Posterior cingulate gyrus (tissue), 11 donors: ENCODE measurements at regions of chr4 and their contacts with region 1.

Region 1: DNA sequence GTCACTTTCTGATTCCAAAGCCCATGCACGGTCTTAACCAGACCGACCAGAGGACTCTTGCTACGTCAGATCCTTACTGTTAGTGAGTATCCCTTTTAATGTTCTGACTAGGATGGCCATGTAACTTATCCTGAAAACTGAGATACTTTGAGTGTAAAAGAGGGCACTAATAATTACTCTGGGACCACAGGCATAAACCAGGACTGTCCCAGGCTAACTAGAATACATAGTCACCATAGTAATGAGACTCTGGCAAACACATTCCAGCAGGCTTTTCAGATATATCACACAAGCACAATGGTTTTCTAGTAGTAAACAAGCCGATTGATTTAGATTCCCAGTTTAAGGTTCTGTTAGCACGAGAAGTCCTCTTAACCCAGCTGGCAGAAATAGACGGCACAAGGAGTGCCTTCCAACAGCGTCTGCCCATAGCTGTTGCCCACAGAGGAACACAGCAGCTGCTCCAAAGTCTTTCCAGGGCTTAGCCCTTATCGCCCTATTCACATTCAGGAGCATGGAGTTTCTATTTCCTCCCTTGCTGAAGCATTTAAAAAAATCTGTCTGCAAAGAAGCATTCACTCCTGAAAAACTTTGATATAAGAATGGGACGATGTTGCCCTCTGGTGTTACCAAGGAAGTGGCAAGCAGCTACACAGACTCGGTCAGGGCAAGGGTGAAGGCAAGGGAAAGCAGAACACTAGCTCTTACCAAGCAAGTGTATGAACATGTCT is 92.4 kb downstream of the CXCL13 start:
- DNase-seq: peak in 3 of 10 donors; percentile 13 to 69 (median 14)

Region 2: GRCh38 chr4:77618383-77619122 is 79.5 kb before region 1 on chr4:
- intact Hi-C with region 1: loop called (anchors 5 kb)
- DNase-seq: peak in 8 of 10 donors; percentile 19 to 90 (median 58)